ENCODE measurements at regions of chr4 and their contacts with region 1.

Region 1: GRCh38 chr4:158065176-158065575 is 107.6 kb downstream of the GASK1B start:
- DNase-seq: no peak
- H3K4me3 ChIP-seq: no peak overlapping the region
- H3K27ac ChIP-seq: peak overlapping the region; percentile 74
- H3K4me1 ChIP-seq: peaks cover 26% of the 10 kb centered on the region
- H3K27me3 ChIP-seq: no peaks in the 10 kb centered on the region
- CTCF ChIP-seq: peak in 1 of 2 donors; percentile 19
- POLR2A ChIP-seq: no peak

Region 2: DNA sequence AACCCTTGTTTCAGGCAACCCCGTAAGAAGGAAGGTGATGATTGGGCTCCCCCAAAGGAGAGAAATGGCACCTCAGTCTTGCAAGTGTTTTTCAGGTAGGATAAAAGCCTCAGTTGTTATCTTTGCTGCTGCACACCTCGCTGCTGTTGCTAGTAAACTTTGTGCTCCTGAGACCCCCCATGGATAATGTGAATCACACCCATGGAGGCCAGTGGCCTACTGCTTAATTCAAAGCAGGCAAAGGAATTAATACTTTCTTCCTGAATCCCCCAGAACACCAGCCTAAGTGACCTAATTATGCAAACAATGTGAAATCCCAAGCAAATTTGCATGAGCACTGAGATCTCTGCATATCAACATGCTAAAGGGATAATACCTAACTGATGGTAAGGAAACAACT is 507.2 kb before region 1 on chr4:
- CTCF ChIA-PET with region 1: no interaction called
- POLR2A ChIA-PET with region 1: no interaction called
- dilution Hi-C with region 1: no loop called
- intact Hi-C with region 1: no loop called
- DNase-seq: no peak
- H3K4me3 ChIP-seq: no peak overlapping the region
- H3K27ac ChIP-seq: no peak overlapping the region
- H3K4me1 ChIP-seq: peaks cover 4% of the 10 kb centered on the region
- H3K27me3 ChIP-seq: no peaks in the 10 kb centered on the region
- CTCF ChIP-seq: no peak
- POLR2A ChIP-seq: no peak

Region 3: GRCh38 chr4:158006990-158007389 is 58.2 kb before region 1 on chr4:
- CTCF ChIA-PET with region 1: no interaction called
- POLR2A ChIA-PET with region 1: no interaction called
- dilution Hi-C with region 1: no loop called
- intact Hi-C with region 1: loop called (anchors 1 kb)
- DNase-seq: peak; percentile 100
- H3K4me3 ChIP-seq: no peak overlapping the region
- H3K27ac ChIP-seq: peak overlapping the region; percentile 75
- H3K4me1 ChIP-seq: peaks cover 36% of the 10 kb centered on the region
- H3K27me3 ChIP-seq: no peaks in the 10 kb centered on the region
- CTCF ChIP-seq: no peak
- POLR2A ChIP-seq: no peak

Region 4: DNA sequence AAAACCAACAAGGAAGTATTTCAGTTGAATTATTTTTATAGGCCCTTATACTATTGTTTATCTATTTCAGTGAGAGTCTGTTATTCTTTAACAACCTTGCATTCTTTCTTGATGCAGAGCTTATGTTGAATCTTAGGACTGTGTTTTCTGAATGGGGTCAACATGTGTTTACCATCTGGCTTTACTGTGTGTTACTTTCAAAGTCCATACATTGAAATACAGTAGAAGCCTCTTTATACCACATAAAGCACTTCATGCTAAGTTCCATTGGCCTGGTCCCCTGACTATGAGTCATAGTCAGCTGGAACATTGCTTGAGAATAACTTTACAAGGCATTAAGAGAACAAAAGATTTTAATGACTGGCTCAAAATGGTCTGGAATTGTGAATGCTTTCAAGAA is 45.0 kb before region 1 on chr4:
- CTCF ChIA-PET with region 1: no interaction called
- POLR2A ChIA-PET with region 1: no interaction called
- dilution Hi-C with region 1: no loop called
- intact Hi-C with region 1: loop called (anchors 1 kb)
- DNase-seq: peak; percentile 96
- H3K4me3 ChIP-seq: peak overlapping the region in 1 of 3 experiments; percentile 30
- H3K27ac ChIP-seq: peak overlapping the region; percentile 95
- H3K4me1 ChIP-seq: peaks cover 59% of the 10 kb centered on the region
- H3K27me3 ChIP-seq: no peaks in the 10 kb centered on the region
- CTCF ChIP-seq: no peak
- POLR2A ChIP-seq: no peak

Region 5: GRCh38 chr4:158033416-158034120 is 31.6 kb before region 1 on chr4:
- CTCF ChIA-PET with region 1: interaction called, 3 read pairs
- POLR2A ChIA-PET with region 1: no interaction called
- dilution Hi-C with region 1: no loop called
- intact Hi-C with region 1: loop called (anchors 1 kb)
- DNase-seq: peak; percentile 96
- H3K4me3 ChIP-seq: peak overlapping the region in 1 of 3 experiments; percentile 11
- H3K27ac ChIP-seq: peak overlapping the region; percentile 85
- H3K4me1 ChIP-seq: peaks cover 29% of the 10 kb centered on the region
- H3K27me3 ChIP-seq: no peaks in the 10 kb centered on the region
- CTCF ChIP-seq: no peak
- POLR2A ChIP-seq: no peak

Region 6: DNA sequence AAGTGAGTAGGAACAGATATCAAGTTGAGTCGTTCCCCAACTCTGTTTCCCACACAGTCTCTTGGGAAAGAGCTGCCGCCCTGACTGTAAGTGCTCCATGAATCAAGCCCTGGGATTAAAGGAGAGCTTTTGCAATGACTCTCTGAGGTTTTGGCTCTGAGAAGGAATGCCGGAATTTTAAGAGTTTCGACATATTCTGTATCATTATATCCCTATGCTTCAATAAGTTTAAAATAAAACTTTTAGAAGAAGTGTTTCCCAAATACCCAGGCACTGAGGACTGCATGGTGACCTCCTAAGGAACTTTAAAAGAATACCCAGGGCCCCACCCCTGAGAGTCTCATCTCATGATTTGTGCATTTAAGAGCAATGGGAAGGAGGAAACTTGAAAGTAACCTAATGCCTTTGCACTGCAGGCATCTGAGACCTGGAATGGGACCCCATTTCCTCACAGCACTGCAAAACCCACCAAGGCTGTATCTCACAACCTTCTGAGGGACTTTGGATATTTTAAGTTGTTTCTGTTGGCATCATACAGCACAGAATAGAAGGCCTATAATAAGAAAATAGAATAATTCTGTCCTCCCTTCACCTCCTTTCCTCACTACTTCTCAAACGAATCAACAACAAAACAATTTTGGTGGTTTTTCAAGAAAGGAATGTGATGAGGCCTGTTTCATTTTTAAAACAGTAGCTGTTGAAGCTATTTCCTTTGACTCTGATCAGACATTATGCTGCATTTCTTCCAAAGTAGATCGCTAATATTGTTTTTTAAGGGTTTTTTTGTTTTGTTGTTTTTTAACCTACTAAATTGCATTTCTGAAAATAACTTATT is 13.6 kb before region 1 on chr4:
- CTCF ChIA-PET with region 1: no interaction called
- POLR2A ChIA-PET with region 1: no interaction called
- dilution Hi-C with region 1: no loop called
- intact Hi-C with region 1: loop called (anchors 2 kb)
- DNase-seq: no peak
- H3K4me3 ChIP-seq: no peak overlapping the region
- H3K27ac ChIP-seq: no peak overlapping the region
- H3K4me1 ChIP-seq: no peaks in the 10 kb centered on the region
- H3K27me3 ChIP-seq: no peaks in the 10 kb centered on the region
- CTCF ChIP-seq: no peak
- POLR2A ChIP-seq: no peak

Region 7: GRCh38 chr4:158121187-158121586 is 56.0 kb after region 1 on chr4:
- CTCF ChIA-PET with region 1: no interaction called
- POLR2A ChIA-PET with region 1: no interaction called
- dilution Hi-C with region 1: no loop called
- intact Hi-C with region 1: loop called (anchors 2 kb)
- DNase-seq: no peak
- H3K4me3 ChIP-seq: no peak overlapping the region
- H3K27ac ChIP-seq: no peak overlapping the region
- H3K4me1 ChIP-seq: no peaks in the 10 kb centered on the region
- H3K27me3 ChIP-seq: no peaks in the 10 kb centered on the region
- CTCF ChIP-seq: no peak
- POLR2A ChIP-seq: no peak

Region 8: DNA sequence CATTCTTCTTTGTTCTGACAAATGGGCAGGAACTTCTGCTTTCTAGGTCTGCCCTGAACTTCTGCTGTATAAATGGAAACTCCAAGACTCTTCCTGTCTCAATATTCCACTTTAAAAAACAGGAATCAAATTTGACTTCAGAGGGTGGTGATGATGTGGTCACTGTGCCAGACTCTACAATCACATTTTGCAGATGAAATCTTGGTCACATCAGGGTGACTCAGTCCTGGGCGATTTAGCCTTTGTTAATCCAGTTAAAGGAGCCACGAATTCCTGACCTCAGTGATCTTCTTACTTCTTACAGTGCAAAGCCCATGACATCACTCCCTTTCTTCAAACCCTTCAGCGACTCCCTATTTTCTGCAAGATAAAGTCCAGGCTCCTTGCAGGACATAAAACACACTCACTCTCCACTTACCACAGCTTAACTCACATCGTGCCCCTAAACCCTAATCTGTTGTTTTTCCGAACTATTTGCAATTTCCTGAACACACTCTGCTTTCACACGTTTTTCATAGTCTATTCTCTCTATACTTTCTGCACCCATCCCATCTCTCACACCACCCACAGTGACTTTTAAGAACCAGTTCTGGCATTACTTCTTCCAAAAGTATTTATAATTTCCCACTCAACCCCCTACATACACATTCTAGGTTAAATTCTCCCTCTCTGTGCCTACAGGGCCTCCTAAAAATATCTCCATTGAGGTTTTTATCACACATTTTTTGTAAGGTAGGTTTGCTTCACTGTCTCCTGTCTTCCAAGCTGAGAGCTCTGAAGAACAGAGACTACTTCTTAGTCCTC is 96.6 kb after region 1 on chr4:
- CTCF ChIA-PET with region 1: no interaction called
- POLR2A ChIA-PET with region 1: no interaction called
- dilution Hi-C with region 1: no loop called
- intact Hi-C with region 1: loop called (anchors 1 kb)
- DNase-seq: peak; percentile 99
- H3K4me3 ChIP-seq: peak overlapping the region in 1 of 3 experiments; percentile 16
- H3K27ac ChIP-seq: peak overlapping the region; percentile 77
- H3K4me1 ChIP-seq: peaks cover 94% of the 10 kb centered on the region
- H3K27me3 ChIP-seq: no peaks in the 10 kb centered on the region
- CTCF ChIP-seq: no peak
- POLR2A ChIP-seq: peak; percentile 49

Measured in endothelial cell of umbilical vein (primary cell).